ENCODE measurements at regions of chr1 and their contacts with region 1.

Region 1: DNA sequence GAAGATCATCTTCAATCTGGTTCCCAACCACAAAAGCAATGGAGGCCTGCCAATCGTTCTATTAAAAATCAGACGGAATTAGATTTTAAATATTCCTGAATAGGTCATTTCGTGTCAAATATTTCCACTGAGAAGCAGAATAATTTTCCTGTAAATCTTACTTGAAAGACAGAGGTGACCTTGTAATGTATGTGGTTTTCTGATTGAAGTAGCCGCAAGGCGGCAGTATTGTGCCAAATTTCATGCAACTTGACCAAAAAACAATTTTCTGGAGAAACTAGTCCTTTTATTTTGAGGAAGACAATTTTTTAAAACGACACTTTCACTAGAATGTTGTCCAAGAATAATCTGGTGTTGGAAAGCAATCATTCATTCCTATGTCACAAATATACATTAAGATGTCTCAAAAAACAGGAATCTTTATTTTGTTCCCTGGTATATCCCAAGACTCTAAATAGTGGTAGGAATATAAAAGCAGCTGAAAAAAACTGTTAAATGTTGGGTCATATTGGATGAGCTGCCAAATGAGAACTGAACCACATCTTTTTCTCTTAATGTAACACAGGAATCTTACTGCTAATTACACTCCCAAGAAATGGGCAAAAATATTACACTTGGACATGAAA is 33.6 kb downstream of the SPAG17 start:
- DNase-seq: no peak
- H3K4me3 ChIP-seq: no peak overlapping the region
- CTCF ChIP-seq: peak; percentile 56

Region 2: GRCh38 chr1:118077331-118078055 is 73.9 kb before region 1 on chr1:
- CTCF ChIA-PET with region 1: interaction called, 11 read pairs
- POLR2A ChIA-PET with region 1: no interaction called
- DNase-seq: no peak
- H3K4me3 ChIP-seq: no peak overlapping the region
- CTCF ChIP-seq: peak; percentile 15

Measured in AG04449 (cell line).